ENCODE measurements at regions of chr10 and their contacts with region 1.

Region 1: GRCh38 chr10:51074238-51075028 is at the start of gene PRKG1:
- DNase-seq: peak; percentile 71 to 89 (median 84)
- H3K4me3 ChIP-seq: peak within 1 kb of the TSS; percentile 51 to 71 (median 59)
- H3K27ac ChIP-seq: peak within 1 kb of the TSS in 4 of 5 donors; percentile 71 to 87 (median 85)
- H3K4me1 ChIP-seq: peaks cover 7 to 16% of the 10 kb centered on the region in 2 donors
- H3K27me3 ChIP-seq: no peaks in the 10 kb centered on the region
- CTCF ChIP-seq: no peak
- POLR2A ChIP-seq: peak in 1 of 2 donors; percentile 75
- total RNA-seq, gene PRKG1: 24.3 to 104 (median 52.7) TPM

Region 2: DNA sequence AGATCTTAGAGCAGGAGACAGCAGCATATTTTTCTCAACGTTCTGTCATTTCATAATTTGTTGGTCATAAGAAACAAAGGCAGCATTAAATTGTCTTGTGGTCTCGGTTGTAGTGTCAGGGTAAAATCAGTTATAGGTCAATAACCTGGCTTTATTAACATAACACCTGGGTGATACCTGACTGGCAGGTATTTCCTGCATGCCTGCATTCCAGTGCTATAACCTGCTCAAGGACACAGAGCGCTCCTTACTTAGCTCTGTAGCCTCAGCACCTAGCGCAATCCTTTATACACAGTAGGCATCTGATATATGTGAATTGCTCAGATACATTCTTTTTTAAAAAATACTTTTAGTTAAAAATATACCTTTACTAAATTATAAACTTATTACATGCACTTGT is 39.1 kb before region 1 on chr10:
- intact Hi-C with region 1: no loop called
- DNase-seq: no peak
- H3K4me3 ChIP-seq: no peak overlapping the region
- H3K27ac ChIP-seq: no peak overlapping the region
- H3K4me1 ChIP-seq: no peaks in the 10 kb centered on the region
- H3K27me3 ChIP-seq: no peaks in the 10 kb centered on the region
- CTCF ChIP-seq: no peak
- POLR2A ChIP-seq: no peak

Region 3: GRCh38 chr10:51244748-51245490 is 170.5 kb after region 1 on chr10:
- intact Hi-C with region 1: loop called in 1 of 2 experiments (anchors 10 kb)
- DNase-seq: peak in 3 of 7 donors; percentile 16 to 36 (median 20)
- H3K4me3 ChIP-seq: no peak overlapping the region
- H3K27ac ChIP-seq: peak overlapping the region in 1 of 5 donors; percentile 15
- H3K4me1 ChIP-seq: peaks cover 3 to 20% of the 10 kb centered on the region in 2 donors
- H3K27me3 ChIP-seq: no peaks in the 10 kb centered on the region
- CTCF ChIP-seq: no peak
- POLR2A ChIP-seq: no peak